Naive thymus-derived CD4-positive, alpha-beta T cell (primary cell): ENCODE measurements at regions of chr5 and their contacts with region 1.

Region 1: DNA sequence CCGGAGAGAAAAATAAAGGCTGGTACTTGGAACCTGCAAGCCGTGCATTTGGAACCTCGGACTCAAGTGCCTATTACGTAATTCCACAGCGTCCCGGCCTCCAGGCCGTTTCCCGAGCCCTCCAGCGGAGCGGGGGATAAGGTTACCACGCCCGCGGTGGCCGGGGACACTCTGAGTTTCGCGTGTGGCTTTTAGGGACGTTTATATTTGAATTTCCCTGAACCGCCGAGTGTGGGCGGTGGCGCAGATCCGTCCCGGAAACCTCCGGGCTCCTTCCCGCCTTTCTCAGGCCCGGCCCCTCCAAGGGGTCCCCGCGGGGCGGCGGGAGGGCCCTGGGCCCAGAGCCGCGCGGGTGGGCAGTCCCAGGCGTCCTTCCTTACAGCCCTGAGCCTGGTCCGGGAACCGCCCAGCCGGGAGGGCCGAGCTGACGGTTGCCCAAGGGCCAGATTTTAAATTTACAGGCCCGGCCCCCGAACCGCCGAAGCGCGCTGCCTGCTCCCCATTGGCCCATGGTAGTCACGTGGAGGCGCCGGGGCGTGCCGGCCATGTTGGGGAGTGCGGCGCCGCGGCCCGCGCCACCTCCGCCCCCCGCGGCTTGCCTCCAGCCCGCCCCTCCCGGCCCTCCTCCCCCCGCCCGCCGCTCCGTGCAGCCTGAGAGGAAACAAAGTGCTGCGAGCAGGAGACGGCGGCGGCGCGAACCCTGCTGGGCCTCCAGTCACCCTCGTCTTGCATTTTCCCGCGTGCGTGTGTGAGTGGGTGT is at the start of gene LMNB1:
- DNase-seq: peak; percentile 90 to 98 (median 94)
- ATAC-seq: peak; percentile 86
- H3K4me3 ChIP-seq: peak within 1 kb of the TSS; percentile 93
- H3K4me3 Mint-ChIP-seq: peak within 1 kb of the TSS; percentile 89 to 97 (median 96)
- H3K27ac ChIP-seq: peak within 1 kb of the TSS; percentile 97
- H3K27ac Mint-ChIP-seq: peak within 1 kb of the TSS; percentile 91 to 99 (median 95)
- H3K4me1 ChIP-seq: peaks cover 18 to 22% of the 10 kb centered on the region in 2 donors
- H3K4me1 Mint-ChIP-seq: peaks cover 6 to 31% (median 25%) of the 10 kb centered on the region in 7 donors
- H3K27me3 ChIP-seq: no peaks in the 10 kb centered on the region
- H3K27me3 Mint-ChIP-seq: no peaks in the 10 kb centered on the region
- total RNA-seq, gene LMNB1: 20.8 to 218 (median 32.6) TPM

Region 2: GRCh38 chr5:126422989-126423788 is 353.5 kb before region 1 on chr5 and contains the start of gene GRAMD2B:
- CTCF ChIA-PET with region 1: no interaction called
- POLR2A ChIA-PET with region 1: interaction called, 4 read pairs
- intact Hi-C with region 1: loop called (anchors 10 kb)
- DNase-seq: peak; percentile 27 to 80 (median 76)
- ATAC-seq: peak; percentile 96
- H3K4me3 ChIP-seq: peak within 1 kb of the TSS; percentile 78
- H3K4me3 Mint-ChIP-seq: peak within 1 kb of the TSS; percentile 85 to 94 (median 94)
- H3K27ac ChIP-seq: peak within 1 kb of the TSS; percentile 100
- H3K27ac Mint-ChIP-seq: peak within 1 kb of the TSS; percentile 85 to 96 (median 95)
- H3K4me1 ChIP-seq: peaks cover 8 to 13% of the 10 kb centered on the region in 2 donors
- H3K4me1 Mint-ChIP-seq: peaks cover 22 to 42% (median 33%) of the 10 kb centered on the region in 7 donors
- H3K27me3 ChIP-seq: no peaks in the 10 kb centered on the region
- H3K27me3 Mint-ChIP-seq: no peaks in the 10 kb centered on the region
- total RNA-seq, gene GRAMD2B: 5.2 to 9.6 (median 7.1) TPM

Region 3: GRCh38 chr5:126600631-126601511 is 175.8 kb before region 1 on chr5 and contains the start of gene PHAX:
- CTCF ChIA-PET with region 1: interaction called, 3 read pairs
- POLR2A ChIA-PET with region 1: interaction called, 7 read pairs
- intact Hi-C with region 1: loop called (anchors 1 kb)
- DNase-seq: peak; percentile 59 to 82 (median 70)
- ATAC-seq: peak; percentile 95
- H3K4me3 ChIP-seq: peak within 1 kb of the TSS; percentile 84
- H3K4me3 Mint-ChIP-seq: peak within 1 kb of the TSS; percentile 84 to 99 (median 96)
- H3K27ac ChIP-seq: peak within 1 kb of the TSS; percentile 78
- H3K27ac Mint-ChIP-seq: peak within 1 kb of the TSS; percentile 86 to 98 (median 93)
- H3K4me1 ChIP-seq: peaks cover 14 to 15% of the 10 kb centered on the region in 2 donors
- H3K4me1 Mint-ChIP-seq: peaks cover 12 to 42% (median 35%) of the 10 kb centered on the region in 7 donors
- H3K27me3 ChIP-seq: no peaks in the 10 kb centered on the region
- H3K27me3 Mint-ChIP-seq: peaks cover 0 to 10% (median 0%) of the 10 kb centered on the region in 5 donors
- total RNA-seq, gene PHAX: 14.5 to 40.9 (median 35.4) TPM

Region 4: DNA sequence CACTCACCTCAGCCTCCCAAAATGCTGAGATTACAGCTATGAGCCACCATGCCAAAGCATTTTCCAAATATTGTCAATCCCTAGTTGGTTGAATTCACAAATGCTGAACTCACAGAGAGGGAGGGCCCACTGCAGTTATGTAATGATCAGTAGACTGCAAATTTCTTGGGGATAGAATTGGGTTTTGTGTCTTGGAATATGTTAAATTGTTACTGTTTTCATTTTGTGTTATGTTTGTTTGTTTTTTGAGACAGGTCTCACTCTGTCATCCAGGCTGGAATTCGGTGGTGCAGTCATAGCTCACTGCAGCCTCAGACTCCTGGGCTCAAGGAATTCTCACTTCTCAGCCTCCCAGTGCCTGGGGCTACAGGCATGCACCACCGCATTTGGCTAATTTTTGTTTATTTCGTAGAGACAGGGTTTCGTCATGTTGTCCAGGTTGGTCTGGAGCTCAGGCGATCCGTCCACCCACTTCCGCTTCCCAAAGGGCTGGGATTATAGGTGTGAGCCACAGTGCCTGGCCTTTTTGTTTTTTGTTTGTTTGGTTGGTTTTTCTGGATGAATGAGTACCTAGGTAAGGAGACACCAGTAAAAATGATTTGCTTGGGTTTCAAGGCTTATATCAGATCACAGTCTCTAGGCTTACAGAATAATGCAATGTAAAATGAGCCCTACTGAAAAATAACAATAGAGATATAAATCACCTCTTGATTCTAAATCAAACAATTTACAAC is 31.3 kb before region 1 on chr5:
- CTCF ChIA-PET with region 1: no interaction called
- POLR2A ChIA-PET with region 1: interaction called, 3 read pairs
- intact Hi-C with region 1: loop called (anchors 1 kb)
- DNase-seq: no peak
- ATAC-seq: no peak
- H3K4me3 ChIP-seq: no peak overlapping the region
- H3K4me3 Mint-ChIP-seq: no peak overlapping the region
- H3K27ac ChIP-seq: no peak overlapping the region
- H3K27ac Mint-ChIP-seq: peak overlapping the region in 1 of 9 donors; percentile 26
- H3K4me1 ChIP-seq: peaks cover 4 to 13% of the 10 kb centered on the region in 2 donors
- H3K4me1 Mint-ChIP-seq: peaks cover 11 to 30% (median 19%) of the 10 kb centered on the region in 7 donors
- H3K27me3 ChIP-seq: no peaks in the 10 kb centered on the region
- H3K27me3 Mint-ChIP-seq: peaks cover 0 to 4% (median 0%) of the 10 kb centered on the region in 5 donors

Region 5: DNA sequence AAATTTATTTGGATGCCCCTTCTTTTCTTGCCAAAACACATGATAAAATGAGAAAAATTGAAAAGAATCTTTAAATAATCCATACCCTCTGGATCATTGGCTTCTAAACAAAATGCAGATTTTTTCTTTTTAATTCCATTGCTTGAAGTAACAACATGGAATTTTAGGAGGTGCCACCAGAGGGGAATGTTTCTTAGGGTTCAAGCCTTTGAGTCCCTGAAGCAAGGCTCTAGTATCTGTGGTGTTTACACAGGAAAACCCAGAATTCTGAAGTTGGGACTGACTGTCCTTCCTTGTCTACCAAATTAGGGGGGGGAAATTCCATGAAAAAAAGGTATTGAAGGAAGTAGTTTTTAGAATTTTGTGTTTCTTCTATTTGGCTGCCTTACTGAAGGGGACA is 69.7 kb after region 1 on chr5:
- CTCF ChIA-PET with region 1: interaction called, 4 read pairs
- POLR2A ChIA-PET with region 1: interaction called, 31 read pairs
- intact Hi-C with region 1: loop called (anchors 1 to 2 kb)
- DNase-seq: no peak
- ATAC-seq: no peak
- H3K4me3 ChIP-seq: peak overlapping the region; percentile 27
- H3K4me3 Mint-ChIP-seq: peak overlapping the region in 7 of 10 donors; percentile 42 to 73 (median 59)
- H3K27ac ChIP-seq: peak overlapping the region; percentile 66
- H3K27ac Mint-ChIP-seq: peak overlapping the region; percentile 27 to 98 (median 94)
- H3K4me1 ChIP-seq: peaks cover 3 to 23% of the 10 kb centered on the region in 2 donors
- H3K4me1 Mint-ChIP-seq: peaks cover 18 to 61% (median 51%) of the 10 kb centered on the region in 7 donors
- H3K27me3 ChIP-seq: no peaks in the 10 kb centered on the region
- H3K27me3 Mint-ChIP-seq: no peaks in the 10 kb centered on the region

Region 6: GRCh38 chr5:126884269-126884819 is 107.7 kb after region 1 on chr5:
- CTCF ChIA-PET with region 1: no interaction called
- POLR2A ChIA-PET with region 1: no interaction called
- intact Hi-C with region 1: no loop called
- DNase-seq: no peak
- ATAC-seq: no peak
- H3K4me3 ChIP-seq: no peak overlapping the region
- H3K4me3 Mint-ChIP-seq: no peak overlapping the region
- H3K27ac ChIP-seq: no peak overlapping the region
- H3K27ac Mint-ChIP-seq: peak overlapping the region in 2 of 9 donors; percentile 16 to 29
- H3K4me1 ChIP-seq: no peaks in the 10 kb centered on the region
- H3K4me1 Mint-ChIP-seq: peaks cover 0 to 8% (median 3%) of the 10 kb centered on the region in 7 donors
- H3K27me3 ChIP-seq: no peaks in the 10 kb centered on the region
- H3K27me3 Mint-ChIP-seq: no peaks in the 10 kb centered on the region

Region 7: DNA sequence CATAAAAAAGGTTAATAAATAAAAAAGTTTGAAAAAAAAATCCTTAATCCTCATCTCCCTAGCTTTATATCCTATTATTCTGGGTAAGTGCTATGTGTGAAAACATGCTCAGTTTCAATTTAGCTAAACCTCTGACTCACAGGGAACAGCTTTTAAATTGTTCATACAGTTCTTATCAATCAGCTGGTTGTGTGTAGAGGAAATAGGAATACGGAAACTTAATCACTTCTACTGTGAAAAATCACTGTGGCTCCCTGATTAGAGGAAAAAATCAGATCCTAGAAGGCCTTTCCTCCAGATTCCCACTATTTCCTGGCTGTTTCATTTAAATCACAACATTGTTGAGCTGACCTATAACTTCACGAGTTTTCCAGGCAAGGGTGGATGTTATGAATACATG is 133.2 kb after region 1 on chr5:
- CTCF ChIA-PET with region 1: no interaction called
- POLR2A ChIA-PET with region 1: no interaction called
- intact Hi-C with region 1: no loop called
- DNase-seq: no peak
- ATAC-seq: no peak
- H3K4me3 ChIP-seq: no peak overlapping the region
- H3K4me3 Mint-ChIP-seq: no peak overlapping the region
- H3K27ac ChIP-seq: no peak overlapping the region
- H3K27ac Mint-ChIP-seq: no peak overlapping the region
- H3K4me1 ChIP-seq: no peaks in the 10 kb centered on the region
- H3K4me1 Mint-ChIP-seq: peaks cover 0 to 2% (median 0%) of the 10 kb centered on the region in 7 donors
- H3K27me3 ChIP-seq: no peaks in the 10 kb centered on the region
- H3K27me3 Mint-ChIP-seq: no peaks in the 10 kb centered on the region

Region 8: DNA sequence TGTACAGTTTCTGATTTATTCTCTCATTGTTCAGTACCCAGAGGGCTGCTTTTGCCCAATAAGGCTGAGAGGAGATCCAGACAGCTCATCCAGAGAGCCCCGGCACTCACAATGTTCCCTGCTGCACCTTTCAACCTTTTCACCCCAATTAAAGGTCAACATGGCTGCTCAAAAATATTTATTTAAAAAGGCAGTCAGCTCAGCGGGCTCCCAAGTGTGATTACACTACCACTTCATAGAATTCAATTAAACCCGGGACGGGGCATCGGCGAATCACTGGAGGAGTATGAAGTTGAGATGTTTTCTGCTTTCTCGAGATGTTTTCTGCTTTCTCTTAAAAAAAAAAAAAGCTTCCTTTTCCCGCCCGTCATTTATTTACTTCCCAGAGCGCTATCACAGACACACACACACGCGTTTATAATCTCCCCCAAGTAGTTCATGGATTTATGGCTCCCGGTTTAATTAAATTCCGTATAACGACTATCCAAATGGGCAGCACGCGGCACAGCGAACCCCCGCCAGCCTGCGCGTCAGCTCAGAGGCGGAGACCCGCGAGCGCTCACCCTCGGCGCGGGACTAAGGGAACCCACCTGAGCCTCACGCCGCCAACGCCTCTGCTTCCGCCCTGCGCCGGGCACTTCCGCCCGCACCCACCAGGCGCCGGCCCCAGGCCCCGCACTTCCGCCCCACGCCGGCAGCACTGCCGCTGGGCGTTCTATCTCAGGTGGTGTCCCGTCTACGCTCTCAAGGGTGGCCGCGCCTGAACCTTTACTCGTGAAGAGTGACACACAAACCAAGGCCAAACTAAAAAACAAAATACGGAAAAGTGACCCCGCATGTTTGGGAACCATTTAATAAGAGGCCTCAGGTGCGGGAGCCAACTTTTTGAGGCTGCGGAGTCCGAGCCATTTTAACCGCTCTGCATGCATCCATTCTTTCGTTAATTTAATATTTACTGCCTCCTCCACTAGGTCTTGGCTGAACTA is 296.5 kb after region 1 on chr5 and contains the start of gene C5orf63:
- CTCF ChIA-PET with region 1: interaction called, 3 read pairs
- POLR2A ChIA-PET with region 1: interaction called, 4 read pairs
- intact Hi-C with region 1: loop called in 1 of 2 experiments (anchors 1 kb)
- DNase-seq: peak; percentile 41 to 78 (median 69)
- ATAC-seq: peak; percentile 91
- H3K4me3 ChIP-seq: peak within 1 kb of the TSS; percentile 83
- H3K4me3 Mint-ChIP-seq: peak within 1 kb of the TSS; percentile 89 to 100 (median 92)
- H3K27ac ChIP-seq: peak within 1 kb of the TSS; percentile 69
- H3K27ac Mint-ChIP-seq: peak within 1 kb of the TSS; percentile 74 to 98 (median 93)
- H3K4me1 ChIP-seq: peaks cover 8 to 10% of the 10 kb centered on the region in 2 donors
- H3K4me1 Mint-ChIP-seq: peaks cover 17 to 39% (median 29%) of the 10 kb centered on the region in 7 donors
- H3K27me3 ChIP-seq: no peaks in the 10 kb centered on the region
- H3K27me3 Mint-ChIP-seq: no peaks in the 10 kb centered on the region
- total RNA-seq, gene C5orf63: 9.2 to 20.7 (median 11.9) TPM

Region 9: GRCh38 chr5:128083033-128083810 is 1306.5 kb after region 1 on chr5 and contains the start of gene SLC12A2:
- CTCF ChIA-PET with region 1: no interaction called
- POLR2A ChIA-PET with region 1: interaction called, 4 read pairs
- intact Hi-C with region 1: loop called in 1 of 2 experiments (anchors 1 kb)
- DNase-seq: peak; percentile 85 to 98 (median 97)
- ATAC-seq: peak; percentile 83
- H3K4me3 ChIP-seq: peak within 1 kb of the TSS; percentile 76
- H3K4me3 Mint-ChIP-seq: peak within 1 kb of the TSS; percentile 89 to 97 (median 94)
- H3K27ac ChIP-seq: peak within 1 kb of the TSS; percentile 89
- H3K27ac Mint-ChIP-seq: peak within 1 kb of the TSS; percentile 89 to 98 (median 92)
- H3K4me1 ChIP-seq: peaks cover 20 to 41% of the 10 kb centered on the region in 2 donors
- H3K4me1 Mint-ChIP-seq: peaks cover 44 to 78% (median 69%) of the 10 kb centered on the region in 7 donors
- H3K27me3 ChIP-seq: no peaks in the 10 kb centered on the region
- H3K27me3 Mint-ChIP-seq: no peaks in the 10 kb centered on the region
- total RNA-seq, gene SLC12A2: 8.2 to 17.3 (median 11.3) TPM